Mammary epithelial cell (primary cell): ENCODE measurements at regions of chr14 and their contacts with region 1.

Region 1: DNA sequence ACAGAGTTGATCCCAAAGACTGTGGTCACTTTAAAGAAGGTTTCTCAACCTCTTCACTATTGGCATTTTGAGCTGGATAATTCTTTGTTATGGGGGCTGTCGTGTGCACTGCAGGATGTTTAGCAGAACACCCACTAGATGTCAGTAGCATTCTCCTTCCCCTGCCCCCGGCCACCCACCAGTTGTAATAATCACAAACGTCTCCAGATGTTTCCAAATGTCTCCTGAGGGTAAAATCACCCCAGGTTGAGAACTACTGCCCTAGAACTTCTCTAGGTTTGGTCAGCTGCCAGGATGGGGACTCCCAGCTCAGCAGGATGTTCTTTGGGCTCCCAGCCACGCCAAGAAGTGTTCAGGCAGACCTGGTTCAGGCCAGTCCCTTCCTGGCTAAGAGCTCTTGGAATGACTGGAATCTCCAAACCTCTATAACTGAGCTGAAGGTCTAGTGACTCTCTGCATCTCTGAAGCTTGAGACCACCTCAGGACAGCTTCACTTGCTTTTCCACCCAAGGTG is 12.5 kb upstream of the AJUBA start:
- DNase-seq: peak; percentile 63
- H3K4me3 ChIP-seq: no peak overlapping the region
- H3K27ac ChIP-seq: no peak overlapping the region
- H3K4me1 ChIP-seq: peaks cover 9% of the 10 kb centered on the region
- H3K27me3 ChIP-seq: no peaks in the 10 kb centered on the region
- CTCF ChIP-seq: peak; percentile 36 to 52

Region 2: DNA sequence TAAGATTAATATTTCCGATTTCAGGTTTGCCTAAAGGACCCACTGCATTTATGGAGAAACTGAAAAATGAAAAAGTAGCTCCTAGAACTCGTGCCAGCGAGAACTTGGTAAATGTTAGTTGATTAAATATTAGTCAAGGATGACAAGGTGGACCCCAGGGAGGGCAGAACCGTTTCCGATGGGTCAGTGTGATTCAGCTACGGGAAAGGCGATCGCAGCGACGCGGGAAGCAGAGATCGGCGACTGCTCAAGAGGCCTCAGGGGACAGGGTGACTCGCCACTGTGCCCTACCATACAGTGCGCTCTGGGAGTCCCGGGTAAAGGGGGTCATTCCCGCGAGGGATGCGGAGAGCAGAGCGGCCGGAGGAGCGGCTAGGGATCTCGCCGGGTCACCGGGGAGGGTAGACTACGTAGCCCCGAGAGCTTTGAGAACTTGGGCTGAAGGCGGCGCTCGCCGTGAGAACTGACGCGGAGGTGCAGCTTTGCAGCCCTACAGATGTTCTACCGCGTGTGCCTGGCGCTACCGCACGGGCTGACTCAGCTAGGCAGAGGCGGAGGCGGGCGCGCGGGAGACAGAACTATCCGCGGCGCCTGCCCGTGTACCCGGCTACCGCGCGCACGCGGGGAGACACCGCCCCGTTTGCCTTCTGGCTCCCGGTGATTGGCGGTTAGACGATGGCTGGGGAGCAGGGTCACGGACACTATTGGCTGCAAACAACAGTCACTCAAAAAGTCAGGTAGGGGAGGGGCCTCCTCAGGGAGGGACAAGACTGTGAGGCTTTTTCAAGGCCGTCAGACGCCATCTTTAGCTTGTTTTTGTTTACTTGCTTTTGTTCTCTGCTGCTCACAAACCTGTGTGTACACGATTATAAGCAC is 12.0 kb after region 1 on chr14:
- CTCF ChIA-PET with region 1: interaction called, 24 read pairs
- dilution Hi-C with region 1: no loop called
- in situ Hi-C with region 1: no loop called
- intact Hi-C with region 1: no loop called
- DNase-seq: peak; percentile 97
- H3K4me3 ChIP-seq: peak overlapping the region; percentile 59 to 78 (median 63)
- H3K27ac ChIP-seq: peak overlapping the region; percentile 68
- H3K4me1 ChIP-seq: peaks cover 24% of the 10 kb centered on the region
- H3K27me3 ChIP-seq: no peaks in the 10 kb centered on the region
- CTCF ChIP-seq: peak; percentile 22 to 43

Region 3: GRCh38 chr14:23052182-23052623 is 57.4 kb after region 1 on chr14:
- CTCF ChIA-PET with region 1: interaction called, 3 read pairs
- dilution Hi-C with region 1: no loop called
- in situ Hi-C with region 1: loop called in 1 of 2 experiments (anchors 5 kb)
- intact Hi-C with region 1: loop called (anchors 1 kb)
- DNase-seq: peak; percentile 40
- H3K4me3 ChIP-seq: no peak overlapping the region
- H3K27ac ChIP-seq: no peak overlapping the region
- H3K4me1 ChIP-seq: peaks cover 15% of the 10 kb centered on the region
- H3K27me3 ChIP-seq: no peaks in the 10 kb centered on the region
- CTCF ChIP-seq: peak; percentile 29 to 60